Aorta (tissue), 5 donors: ENCODE measurements at regions of chr9 and their contacts with region 1.

Region 1: GRCh38 chr9:121538246-121538645 is 38.6 kb upstream of the GGTA1 start:
- DNase-seq: peak in 1 of 2 donors; percentile 26
- ATAC-seq: no peak
- H3K4me3 ChIP-seq: no peak overlapping the region
- H3K27ac ChIP-seq: peak overlapping the region in 1 of 2 donors; percentile 8
- H3K4me1 ChIP-seq: no peaks in the 10 kb centered on the region
- H3K27me3 ChIP-seq: no peaks in the 10 kb centered on the region

Region 2: GRCh38 chr9:121350993-121351561 is 187.2 kb before region 1 on chr9:
- intact Hi-C with region 1: no loop called
- DNase-seq: peak; percentile 86 to 87
- ATAC-seq: peak; percentile 83
- H3K4me3 ChIP-seq: no peak overlapping the region
- H3K27ac ChIP-seq: peak overlapping the region; percentile 51 to 89
- H3K4me1 ChIP-seq: peaks cover 2 to 5% of the 10 kb centered on the region in 2 donors
- H3K27me3 ChIP-seq: no peaks in the 10 kb centered on the region

Region 3: GRCh38 chr9:121445981-121446380 is 92.3 kb before region 1 on chr9:
- intact Hi-C with region 1: loop called in 1 of 2 experiments (anchors 5 kb)
- DNase-seq: no peak
- ATAC-seq: no peak
- H3K4me3 ChIP-seq: no peak overlapping the region
- H3K27ac ChIP-seq: no peak overlapping the region
- H3K4me1 ChIP-seq: no peaks in the 10 kb centered on the region
- H3K27me3 ChIP-seq: no peaks in the 10 kb centered on the region

Region 4: GRCh38 chr9:121463026-121463807 is 75.0 kb before region 1 on chr9:
- intact Hi-C with region 1: loop called (anchors 5 kb)
- DNase-seq: peak; percentile 77 to 89
- ATAC-seq: peak; percentile 75
- H3K4me3 ChIP-seq: no peak overlapping the region
- H3K27ac ChIP-seq: peak overlapping the region in 1 of 2 donors; percentile 34
- H3K4me1 ChIP-seq: no peaks in the 10 kb centered on the region
- H3K27me3 ChIP-seq: no peaks in the 10 kb centered on the region

Region 5: DNA sequence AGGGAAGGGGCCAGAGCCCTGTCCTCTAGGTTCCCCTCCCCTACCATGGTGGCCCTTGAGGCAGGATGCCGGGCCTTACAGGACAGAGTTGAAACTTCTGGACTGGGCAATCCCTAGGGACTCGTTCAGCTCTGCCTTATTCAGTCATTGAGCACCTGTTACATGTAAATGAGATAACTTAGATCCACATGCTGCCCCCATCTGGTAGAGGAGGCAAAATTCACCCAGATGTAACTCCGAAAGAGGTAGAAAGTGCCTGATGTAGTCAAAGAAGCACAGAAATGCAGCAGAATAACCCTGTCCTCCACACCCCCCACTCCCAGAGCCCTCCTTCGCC is 40.1 kb before region 1 on chr9:
- intact Hi-C with region 1: loop called in 1 of 2 experiments (anchors 5 kb)
- DNase-seq: peak in 1 of 2 donors; percentile 74
- ATAC-seq: peak; percentile 82
- H3K4me3 ChIP-seq: peak overlapping the region; percentile 70 to 79
- H3K27ac ChIP-seq: peak overlapping the region in 1 of 2 donors; percentile 58
- H3K4me1 ChIP-seq: no peaks in the 10 kb centered on the region
- H3K27me3 ChIP-seq: no peaks in the 10 kb centered on the region